A549 (cell line): ENCODE measurements at regions of chr17 and their contacts with region 1.

Region 1: DNA sequence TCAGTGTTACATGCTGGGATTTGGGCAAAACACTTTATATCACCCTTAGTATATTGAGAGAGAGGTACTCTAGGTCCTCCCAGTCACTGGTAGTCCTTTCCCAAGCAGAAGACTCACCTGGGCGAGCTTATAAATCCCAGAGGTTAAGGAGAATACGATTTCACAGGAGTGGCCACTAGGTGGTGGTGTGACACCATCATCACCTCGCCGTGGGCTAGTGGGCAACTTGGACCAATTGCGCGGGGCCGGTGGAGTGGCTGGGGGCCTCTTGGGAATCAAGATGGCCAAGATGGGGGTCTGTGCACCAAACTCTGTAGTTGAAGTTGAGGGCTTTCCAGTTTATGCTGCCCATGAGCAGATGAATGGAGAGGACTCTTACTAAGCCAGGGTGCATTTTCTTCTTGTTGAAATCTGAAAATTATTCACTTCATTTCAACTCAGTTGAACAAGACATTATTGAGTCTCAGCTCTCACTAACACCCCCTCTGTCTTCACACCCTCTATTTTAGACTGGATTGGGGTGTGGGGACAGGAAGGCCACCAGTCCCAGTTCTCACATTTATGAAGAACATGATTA is 38.2 kb upstream of the PIRT start:
- DNase-seq: peak; percentile 53 to 57
- ATAC-seq: peak; percentile 86 to 96; a peak in 5 of 6 replicates
- H3K4me3 ChIP-seq: no peak overlapping the region
- H3K27ac ChIP-seq: no peak overlapping the region
- H3K4me1 ChIP-seq: no peaks in the 10 kb centered on the region
- CTCF ChIP-seq: peak; percentile 86
- EP300 ChIP-seq: no peak
- POLR2A ChIP-seq: no peak
- RAD21 ChIP-seq: peak; percentile 85 to 88

Region 2: GRCh38 chr17:10844621-10845387 is 31.3 kb before region 1 on chr17:
- CTCF ChIA-PET with region 1: interaction called, 15 read pairs
- POLR2A ChIA-PET with region 1: no interaction called
- DNase-seq: peak; percentile 82 to 86
- ATAC-seq: peak; percentile 91 to 98
- H3K4me3 ChIP-seq: peak overlapping the region; percentile 38
- H3K27ac ChIP-seq: peak overlapping the region; percentile 34 to 77
- H3K4me1 ChIP-seq: no peaks in the 10 kb centered on the region
- CTCF ChIP-seq: peak; percentile 97
- EP300 ChIP-seq: no peak
- POLR2A ChIP-seq: no peak
- RAD21 ChIP-seq: peak; percentile 90 to 93

Region 3: DNA sequence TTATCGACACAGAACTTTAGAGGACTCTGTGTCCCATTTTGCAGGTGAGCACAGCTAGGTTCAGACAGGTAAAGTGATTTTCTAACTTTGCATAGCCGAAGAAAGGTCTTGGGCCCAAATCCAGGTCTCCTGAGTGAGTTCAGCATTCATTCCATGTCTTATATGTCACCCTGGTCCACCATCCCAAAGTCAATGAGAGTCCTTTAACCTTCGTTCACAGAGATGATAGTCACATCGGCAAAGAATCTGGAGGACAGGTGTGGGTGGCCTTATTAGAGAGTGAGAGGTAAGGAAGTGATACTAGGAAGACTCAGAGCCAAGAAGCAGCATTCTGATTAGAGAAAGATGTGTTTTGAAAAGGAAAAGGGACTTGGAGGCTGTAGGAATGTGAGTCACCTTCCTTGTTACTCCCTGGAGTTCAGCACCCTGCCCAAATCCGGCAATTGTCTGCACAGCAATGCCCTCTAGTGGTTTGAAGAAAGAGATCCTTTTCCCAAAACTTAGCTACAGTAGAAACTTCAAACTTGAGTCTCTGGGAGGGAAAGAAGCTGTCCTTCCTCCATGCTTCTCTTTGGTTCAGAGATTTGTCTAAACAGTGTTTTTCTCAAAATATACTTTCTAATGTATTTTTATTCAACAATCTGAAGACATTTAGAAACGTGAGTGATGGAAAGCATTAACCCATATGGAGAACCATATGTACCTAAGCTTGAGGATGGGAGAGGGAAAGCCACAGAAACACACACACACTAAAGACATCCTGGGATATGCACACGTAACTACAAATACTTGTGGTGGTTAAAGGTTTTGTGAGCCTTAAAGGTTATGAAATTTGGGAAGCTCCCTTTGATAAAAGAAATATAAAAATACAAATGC is 268.5 kb after region 1 on chr17:
- CTCF ChIA-PET with region 1: interaction called, 17 read pairs
- POLR2A ChIA-PET with region 1: no interaction called
- DNase-seq: peak; percentile 28 to 63
- ATAC-seq: peak; percentile 71 to 83; a peak in 5 of 6 replicates
- H3K4me3 ChIP-seq: no peak overlapping the region
- H3K27ac ChIP-seq: no peak overlapping the region
- H3K4me1 ChIP-seq: no peaks in the 10 kb centered on the region
- CTCF ChIP-seq: peak; percentile 52
- EP300 ChIP-seq: no peak
- POLR2A ChIP-seq: no peak
- RAD21 ChIP-seq: peak; percentile 55 to 73

Region 4: DNA sequence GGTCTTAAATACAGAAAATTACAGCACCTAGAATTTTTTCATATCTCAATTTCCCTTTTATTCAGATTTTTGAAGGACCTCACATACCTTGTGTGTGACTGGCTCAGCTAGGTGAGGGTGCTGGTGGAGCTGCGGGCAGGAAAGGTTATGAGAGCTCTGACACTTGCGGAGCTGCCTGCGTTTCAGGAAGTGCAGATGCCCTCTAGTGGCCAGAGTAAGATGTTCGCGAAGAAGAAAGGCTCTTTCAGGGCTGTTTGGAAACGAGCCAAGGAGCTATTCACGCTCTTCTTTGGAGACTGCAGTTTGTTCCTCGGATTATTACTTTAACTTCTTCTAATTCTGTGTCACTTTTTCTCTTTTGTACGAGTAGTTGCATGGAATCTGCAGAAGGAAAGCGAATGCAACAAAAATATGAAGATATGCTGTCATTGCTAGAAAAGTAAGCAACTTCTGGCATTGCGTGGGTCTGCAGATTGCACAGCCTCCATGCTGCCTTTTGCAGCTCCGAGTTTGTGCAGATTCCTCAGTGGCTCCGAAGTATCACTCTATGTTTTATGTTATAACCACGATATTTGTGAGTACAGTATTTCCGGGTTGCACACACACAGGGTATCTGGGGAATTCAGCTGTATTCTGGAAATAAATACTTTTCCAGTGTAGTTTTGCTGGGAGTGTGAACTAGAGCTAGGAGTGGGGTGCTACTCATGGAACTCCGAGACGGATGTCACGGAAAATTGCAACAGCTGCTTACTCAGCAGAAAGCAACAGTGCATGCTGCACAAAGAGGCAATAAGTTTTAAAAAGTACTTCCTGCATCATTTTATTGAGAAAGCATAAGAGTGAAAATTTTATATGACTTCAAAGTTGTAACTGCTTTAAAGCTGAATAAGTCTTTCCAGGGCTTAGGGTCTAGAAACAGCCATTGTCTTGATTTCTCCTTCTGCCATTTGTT is 768.5 kb after region 1 on chr17:
- CTCF ChIA-PET with region 1: interaction called, 29 read pairs
- POLR2A ChIA-PET with region 1: no interaction called
- DNase-seq: peak; percentile 36 to 82
- ATAC-seq: peak; percentile 85 to 89
- H3K4me3 ChIP-seq: no peak overlapping the region
- H3K27ac ChIP-seq: no peak overlapping the region
- H3K4me1 ChIP-seq: no peaks in the 10 kb centered on the region
- CTCF ChIP-seq: peak; percentile 83
- EP300 ChIP-seq: no peak
- POLR2A ChIP-seq: no peak
- RAD21 ChIP-seq: peak; percentile 58 to 71; a peak in 4 of 5 replicates

Region 5: DNA sequence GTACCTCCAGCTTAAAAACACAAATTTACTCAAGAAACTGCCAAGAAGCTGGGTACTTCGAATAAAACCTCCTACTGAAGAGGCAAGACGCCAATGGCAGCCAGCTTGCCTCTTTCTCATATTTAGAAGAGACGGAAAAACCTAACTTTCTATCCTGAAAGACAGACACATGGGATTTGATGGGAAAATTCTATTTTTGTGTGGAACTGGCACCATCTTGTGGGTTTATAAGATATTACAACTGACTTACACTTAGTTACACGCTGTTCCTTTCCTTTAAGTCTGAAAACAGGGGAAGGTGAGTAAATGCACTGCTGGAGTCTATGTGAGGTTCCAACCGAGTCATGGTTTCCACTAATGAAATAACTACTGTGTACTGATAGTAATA is 1110.9 kb after region 1 on chr17:
- CTCF ChIA-PET with region 1: interaction called, 37 read pairs
- POLR2A ChIA-PET with region 1: no interaction called
- DNase-seq: peak; percentile 49 to 66
- ATAC-seq: peak; percentile 74 to 84; a peak in 5 of 6 replicates
- H3K4me3 ChIP-seq: no peak overlapping the region
- H3K27ac ChIP-seq: no peak overlapping the region
- H3K4me1 ChIP-seq: no peaks in the 10 kb centered on the region
- CTCF ChIP-seq: peak; percentile 79
- EP300 ChIP-seq: no peak
- POLR2A ChIP-seq: no peak
- RAD21 ChIP-seq: peak; percentile 73 to 82